PC-3 (cell line): ENCODE measurements at regions of chr15 and their contacts with region 1.

Region 1: GRCh38 chr15:20659265-20659664 is 117.7 kb upstream of the GOLGA6L6 start:
- DNase-seq: no peak
- ATAC-seq: no peak
- H3K4me3 ChIP-seq: no peak overlapping the region
- H3K27ac ChIP-seq: no peak overlapping the region
- H3K4me1 ChIP-seq: no peaks in the 10 kb centered on the region
- H3K27me3 ChIP-seq: no peaks in the 10 kb centered on the region
- CTCF ChIP-seq: no peak

Region 2: DNA sequence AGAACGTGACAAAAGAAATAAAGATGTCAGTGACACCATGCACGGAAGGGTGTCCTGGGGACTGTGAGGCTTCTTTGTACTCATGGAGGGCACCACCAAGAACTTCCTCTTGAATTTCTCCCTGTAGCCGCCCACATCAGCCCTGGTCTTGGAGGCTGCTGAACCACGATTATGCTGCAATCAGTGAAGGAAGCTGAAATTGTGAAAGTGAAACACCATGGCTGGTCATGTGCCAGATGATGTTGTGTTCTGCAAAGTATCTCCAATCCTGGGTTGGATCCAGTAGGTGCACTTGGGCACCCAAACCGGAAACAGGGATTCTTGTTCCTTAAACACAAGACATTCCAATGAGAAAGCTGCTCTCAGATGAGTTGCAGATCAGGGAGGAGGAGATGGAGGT is 13.3 kb before region 1 on chr15:
- CTCF ChIA-PET with region 1: no interaction called
- POLR2A ChIA-PET with region 1: no interaction called
- intact Hi-C with region 1: loop called (anchors 1 kb)
- DNase-seq: no peak
- ATAC-seq: no peak
- H3K4me3 ChIP-seq: no peak overlapping the region
- H3K27ac ChIP-seq: no peak overlapping the region
- H3K4me1 ChIP-seq: no peaks in the 10 kb centered on the region
- H3K27me3 ChIP-seq: peaks cover 4% of the 10 kb centered on the region; the same call in 1 of the 2 replicates
- CTCF ChIP-seq: no peak